ENCODE measurements at regions of chr5 and their contacts with region 1.

Region 1: DNA sequence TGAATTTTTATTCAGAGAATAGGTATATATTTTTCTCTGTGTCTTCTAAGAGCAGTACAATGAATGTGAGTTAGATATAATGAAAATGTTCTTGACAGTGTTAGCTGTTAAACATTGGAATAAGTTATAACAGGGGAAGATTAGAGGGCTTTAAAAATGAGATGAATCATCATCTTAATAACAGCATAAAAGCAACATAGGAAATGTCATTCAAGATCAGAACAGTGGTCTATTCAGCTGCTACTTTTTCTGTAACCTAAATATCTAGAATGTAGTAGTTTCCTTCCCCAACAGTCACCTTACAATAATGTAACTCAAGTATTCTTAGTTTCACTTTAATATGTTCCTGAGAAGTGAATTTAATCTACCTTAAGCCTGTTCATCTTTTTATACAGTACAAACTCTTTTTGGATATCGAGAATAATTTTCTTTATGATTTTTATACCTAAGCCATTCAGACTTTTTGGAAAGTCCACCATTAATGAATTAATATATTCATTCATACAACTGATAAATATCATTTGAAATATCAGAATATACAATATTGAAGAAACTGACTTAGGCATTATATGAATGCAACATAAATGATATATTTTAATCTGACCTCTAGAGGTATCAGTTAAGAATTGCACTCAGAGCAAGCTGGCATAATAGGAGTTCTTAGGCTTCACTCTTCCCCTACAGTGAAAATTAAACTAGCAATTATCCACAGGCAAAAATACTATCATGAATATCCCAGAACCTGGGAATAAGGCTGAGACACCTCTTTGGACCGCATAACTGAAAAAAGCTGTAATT is 66.1 kb upstream of the EDIL3 start:
- DNase-seq: peak; percentile 30
- H3K4me3 ChIP-seq: no peak overlapping the region
- H3K27ac ChIP-seq: peak overlapping the region in 1 of 2 experiments; percentile 12; a peak in 1 of 4 replicates
- H3K4me1 ChIP-seq: no peaks in the 10 kb centered on the region
- H3K27me3 ChIP-seq: no peaks in the 10 kb centered on the region
- CTCF ChIP-seq: peak; percentile 57
- EP300 ChIP-seq: no peak
- RAD21 ChIP-seq: peak; percentile 56

Region 2: DNA sequence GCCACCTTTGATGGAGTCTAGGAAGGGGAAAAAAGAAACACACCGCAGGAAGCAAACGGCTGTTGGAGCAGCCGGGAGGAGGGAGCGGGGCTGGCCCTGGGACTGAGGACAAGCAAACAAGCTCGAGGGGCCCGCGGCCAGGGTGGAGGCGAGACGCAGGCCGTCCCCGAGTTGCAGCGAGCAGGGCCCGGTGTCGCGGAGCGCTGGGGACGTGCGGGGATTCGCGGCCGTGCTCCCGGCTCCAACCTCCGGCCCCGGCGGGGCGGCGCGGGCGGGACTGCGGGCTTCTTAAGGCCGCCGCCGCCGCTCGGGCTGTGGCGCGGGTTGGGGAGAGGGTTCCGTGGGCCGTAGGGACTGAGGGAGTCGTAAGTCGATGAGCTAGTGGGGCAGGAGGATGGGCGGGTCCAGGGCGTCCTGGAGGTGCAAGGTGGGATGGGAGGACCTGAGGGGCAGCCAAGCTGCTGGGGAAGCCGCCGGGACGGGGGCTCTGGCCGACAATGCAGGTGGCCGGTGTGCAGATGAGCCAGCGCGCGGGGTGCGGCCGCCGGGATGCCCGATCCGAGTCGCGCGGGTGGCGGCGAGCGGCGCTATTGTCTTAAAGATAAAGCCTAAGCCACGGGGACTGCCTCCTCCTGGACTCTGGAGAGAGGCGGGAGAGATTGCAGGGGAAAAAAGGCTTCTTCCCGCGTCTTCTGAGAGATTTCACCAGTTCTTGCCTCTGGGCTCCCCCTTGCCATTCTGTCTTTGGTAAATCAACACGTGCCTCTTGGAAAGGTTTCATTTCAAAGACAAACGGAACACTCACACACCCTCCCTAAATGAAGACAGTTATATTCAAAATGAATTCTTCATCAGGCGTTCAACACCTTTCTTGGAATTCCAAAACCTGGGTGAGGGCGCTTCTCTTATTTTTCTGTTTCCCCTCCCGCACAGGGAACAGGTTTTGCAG is 728.6 kb before region 1 on chr5:
- CTCF ChIA-PET with region 1: interaction called, 13 read pairs
- POLR2A ChIA-PET with region 1: no interaction called
- DNase-seq: peak; percentile 85
- H3K4me3 ChIP-seq: peak overlapping the region; percentile 62 to 65
- H3K27ac ChIP-seq: peak overlapping the region; percentile 47 to 76
- H3K4me1 ChIP-seq: peaks cover 9 to 15% of the 10 kb centered on the region in 2 experiments; a peak in 3 of 4 replicates
- H3K27me3 ChIP-seq: no peaks in the 10 kb centered on the region
- CTCF ChIP-seq: peak; percentile 74
- EP300 ChIP-seq: no peak
- RAD21 ChIP-seq: peak; percentile 80

Region 3: DNA sequence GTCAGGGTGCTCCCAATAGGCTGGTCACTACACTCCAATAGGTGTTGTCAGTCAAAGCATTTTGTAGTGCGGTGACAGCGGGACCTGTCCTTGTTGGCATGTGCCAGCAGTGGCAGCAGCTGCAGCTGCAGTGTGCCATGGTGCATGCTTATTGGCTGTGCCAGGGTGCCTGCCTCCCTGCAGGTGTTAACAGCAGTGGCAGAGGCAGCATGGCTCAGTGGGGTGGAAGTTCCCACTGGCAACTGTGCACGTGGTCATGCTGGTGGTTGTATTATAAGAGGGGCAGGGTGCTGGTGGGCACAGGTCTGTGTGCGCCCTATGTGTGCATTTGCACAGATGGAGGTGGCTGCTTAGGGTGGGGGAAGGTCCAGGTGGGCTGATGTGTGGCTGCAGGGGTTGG is 67.6 kb after region 1 on chr5:
- CTCF ChIA-PET with region 1: no interaction called
- POLR2A ChIA-PET with region 1: no interaction called
- DNase-seq: no peak
- H3K4me3 ChIP-seq: no peak overlapping the region
- H3K27ac ChIP-seq: no peak overlapping the region
- H3K4me1 ChIP-seq: no peaks in the 10 kb centered on the region
- H3K27me3 ChIP-seq: no peaks in the 10 kb centered on the region
- CTCF ChIP-seq: no peak
- EP300 ChIP-seq: no peak
- RAD21 ChIP-seq: no peak